GM12878 (cell line): ENCODE measurements at regions of chr2 and their contacts with region 1.

Region 1: GRCh38 chr2:9112079-9112721 is 94.4 kb upstream of the ASAP2 start:
- DNase-seq: no peak
- ATAC-seq: no peak
- H3K4me3 ChIP-seq: no peak overlapping the region
- H3K27ac ChIP-seq: no peak overlapping the region
- H3K4me1 ChIP-seq: no peaks in the 10 kb centered on the region
- H3K27me3 ChIP-seq: no peaks in the 10 kb centered on the region; a peak in 1 of 4 replicates
- CTCF ChIP-seq: no peak
- EP300 ChIP-seq: no peak
- POLR2A ChIP-seq: no peak
- RAD21 ChIP-seq: no peak

Region 2: GRCh38 chr2:8882094-8882493 is 230.1 kb before region 1 on chr2:
- CTCF ChIA-PET with region 1: interaction called, 3 read pairs
- POLR2A ChIA-PET with region 1: no interaction called
- RAD21 ChIA-PET with region 1: interaction called, 10 read pairs
- SMC1A ChIA-PET with region 1: interaction called, 5 read pairs
- in situ Hi-C with region 1: no loop called
- intact Hi-C with region 1: no loop called
- DNase-seq: no peak
- ATAC-seq: peak; percentile 40; the same call in 2 of the 3 replicates
- H3K4me3 ChIP-seq: no peak overlapping the region
- H3K27ac ChIP-seq: no peak overlapping the region
- H3K4me1 ChIP-seq: no peaks in the 10 kb centered on the region
- H3K27me3 ChIP-seq: no peaks in the 10 kb centered on the region
- CTCF ChIP-seq: peak in 2 of 3 experiments; percentile 20 to 32; a peak in 2 of 6 replicates
- EP300 ChIP-seq: no peak
- POLR2A ChIP-seq: no peak
- RAD21 ChIP-seq: no peak

Region 3: GRCh38 chr2:8927510-8928455 is 184.4 kb before region 1 on chr2:
- CTCF ChIA-PET with region 1: no interaction called
- POLR2A ChIA-PET with region 1: no interaction called
- RAD21 ChIA-PET with region 1: no interaction called
- SMC1A ChIA-PET with region 1: no interaction called
- in situ Hi-C with region 1: no loop called
- intact Hi-C with region 1: no loop called
- DNase-seq: no peak
- ATAC-seq: no peak
- H3K4me3 ChIP-seq: no peak overlapping the region
- H3K27ac ChIP-seq: no peak overlapping the region
- H3K4me1 ChIP-seq: no peaks in the 10 kb centered on the region
- H3K27me3 ChIP-seq: no peaks in the 10 kb centered on the region
- CTCF ChIP-seq: no peak
- EP300 ChIP-seq: no peak
- POLR2A ChIP-seq: no peak
- RAD21 ChIP-seq: no peak

Region 4: DNA sequence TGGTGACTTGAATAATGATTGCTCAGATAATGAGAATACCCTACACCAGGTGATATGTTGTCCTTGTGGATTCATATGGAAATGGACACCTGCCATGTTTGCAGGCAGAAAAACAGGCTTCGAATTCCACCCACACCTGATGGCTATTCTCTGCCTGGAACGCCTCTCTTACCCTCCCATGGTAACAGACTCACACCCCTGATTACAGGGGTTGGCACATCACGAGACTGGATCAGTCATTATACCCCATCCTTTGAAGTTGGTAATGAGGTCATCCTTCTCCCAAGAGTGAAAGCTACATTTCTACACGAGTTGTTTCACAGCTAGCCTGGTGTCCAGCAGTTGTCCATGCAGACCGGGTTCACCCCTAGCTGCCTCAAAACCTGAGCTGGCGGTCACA is 37.3 kb before region 1 on chr2:
- CTCF ChIA-PET with region 1: no interaction called
- POLR2A ChIA-PET with region 1: no interaction called
- RAD21 ChIA-PET with region 1: no interaction called
- SMC1A ChIA-PET with region 1: no interaction called
- in situ Hi-C with region 1: no loop called
- intact Hi-C with region 1: no loop called
- DNase-seq: no peak
- ATAC-seq: peak; percentile 91
- H3K4me3 ChIP-seq: no peak overlapping the region
- H3K27ac ChIP-seq: no peak overlapping the region
- H3K4me1 ChIP-seq: no peaks in the 10 kb centered on the region
- H3K27me3 ChIP-seq: no peaks in the 10 kb centered on the region
- CTCF ChIP-seq: no peak
- EP300 ChIP-seq: no peak
- POLR2A ChIP-seq: no peak
- RAD21 ChIP-seq: no peak